Common myeloid progenitor, CD34-positive (primary cell): ENCODE measurements at regions of chr6 and their contacts with region 1.

Region 1: DNA sequence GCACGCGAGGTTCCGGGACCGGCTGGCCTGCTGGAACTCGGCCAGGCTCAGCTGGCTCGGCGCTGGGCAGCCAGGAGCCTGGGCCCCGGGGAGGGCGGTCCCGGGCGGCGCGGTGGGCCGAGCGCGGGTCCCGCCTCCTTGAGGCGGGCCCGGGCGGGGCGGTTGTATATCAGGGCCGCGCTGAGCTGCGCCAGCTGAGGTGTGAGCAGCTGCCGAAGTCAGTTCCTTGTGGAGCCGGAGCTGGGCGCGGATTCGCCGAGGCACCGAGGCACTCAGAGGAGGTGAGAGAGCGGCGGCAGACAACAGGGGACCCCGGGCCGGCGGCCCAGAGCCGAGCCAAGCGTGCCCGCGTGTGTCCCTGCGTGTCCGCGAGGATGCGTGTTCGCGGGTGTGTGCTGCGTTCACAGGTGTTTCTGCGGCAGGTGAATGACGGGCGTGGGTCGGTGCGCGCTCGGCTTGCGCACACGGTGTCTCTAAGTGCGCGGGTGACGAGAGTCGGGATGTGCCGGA is at the start of gene CDKN1A:
- DNase-seq: peak; percentile 70 to 86 (median 84)
- H3K4me3 ChIP-seq: peak within 1 kb of the TSS; percentile 23 to 87 (median 76)
- H3K27ac ChIP-seq: peak within 1 kb of the TSS in 1 of 2 experiments; percentile 49
- H3K4me1 ChIP-seq: peaks cover 10 to 68% (median 44%) of the 10 kb centered on the region in 4 experiments
- H3K27me3 ChIP-seq: peaks cover 0 to 32% (median 0%) of the 10 kb centered on the region in 5 experiments

Region 2: GRCh38 chr6:36268478-36269275 is 409.9 kb before region 1 on chr6:
- CTCF ChIA-PET with region 1: no interaction called
- POLR2A ChIA-PET with region 1: no interaction called
- DNase-seq: no peak
- H3K4me3 ChIP-seq: no peak overlapping the region
- H3K27ac ChIP-seq: no peak overlapping the region
- H3K4me1 ChIP-seq: no peaks in the 10 kb centered on the region
- H3K27me3 ChIP-seq: peaks cover 0 to 3% (median 0%) of the 10 kb centered on the region in 5 experiments

Region 3: DNA sequence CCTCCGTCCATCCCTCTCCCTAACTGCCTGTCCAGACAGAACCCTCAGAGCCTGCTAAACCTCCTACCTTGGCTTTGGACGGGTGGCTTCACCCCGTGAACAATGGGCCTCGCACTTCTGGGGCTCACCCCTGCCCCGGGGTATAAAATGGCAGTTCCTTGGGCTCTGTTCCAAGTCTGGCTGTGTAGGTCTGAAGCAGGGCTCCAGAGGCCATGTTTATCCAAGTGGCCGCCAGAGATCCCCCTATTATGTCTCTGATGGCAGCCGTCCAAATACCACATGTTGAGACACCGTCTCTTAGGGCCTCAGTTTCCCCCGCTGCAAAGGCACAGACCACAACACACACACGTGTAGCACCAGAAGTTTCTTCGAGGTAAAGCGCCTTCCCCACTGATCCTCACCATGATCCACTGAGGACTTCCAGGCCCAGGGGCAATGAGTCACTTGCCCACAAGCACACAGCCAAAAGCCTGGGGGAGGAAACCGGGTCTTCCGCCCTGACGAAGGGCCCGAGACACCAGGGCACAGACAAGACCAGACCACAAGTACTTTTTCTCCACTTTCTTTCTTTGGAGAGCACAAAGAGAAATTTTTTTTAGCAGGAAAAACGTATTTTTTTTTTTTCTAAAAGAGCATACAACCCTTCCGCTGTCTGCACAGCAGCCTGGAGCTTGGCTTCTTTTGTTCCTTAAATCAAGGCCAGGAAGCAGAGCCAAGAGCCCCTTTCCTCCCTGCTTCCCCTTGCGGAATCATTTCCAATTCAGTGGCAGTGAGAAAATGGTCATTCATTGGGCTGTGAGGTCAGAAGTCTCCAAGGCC is 148.9 kb after region 1 on chr6:
- CTCF ChIA-PET with region 1: no interaction called
- POLR2A ChIA-PET with region 1: interaction called, 10 read pairs
- DNase-seq: peak; percentile 90 to 96 (median 94)
- H3K4me3 ChIP-seq: peak overlapping the region in 3 of 7 experiments; percentile 7 to 26 (median 17)
- H3K27ac ChIP-seq: no peak overlapping the region
- H3K4me1 ChIP-seq: peaks cover 2 to 30% (median 24%) of the 10 kb centered on the region in 4 experiments
- H3K27me3 ChIP-seq: peaks cover 0 to 2% (median 0%) of the 10 kb centered on the region in 5 experiments